Activated T-helper 1 cell treated with anti-CD3 and anti-CD28 coated beads, Interleukin-12 subunit alpha, Interleukin-12 subunit beta, Interleukin-2, Interleukin-4 antibody, amounts not matched to agents 30 ng/mL and 10 ng/mL and 1 ng/mL, durations not matched to agents 14 hours and 24 hours and 36 hours (primary cell): ENCODE measurements at regions of chr10 and their contacts with region 1.

Region 1: GRCh38 chr10:8130973-8131911 is 76.8 kb downstream of the GATA3 start:
- DNase-seq: peak; percentile 50
- H3K4me3 Mint-ChIP-seq: peak overlapping the region; percentile 61
- H3K27ac Mint-ChIP-seq: peak overlapping the region; percentile 90
- H3K4me1 Mint-ChIP-seq: peaks cover 62% of the 10 kb centered on the region
- H3K27me3 Mint-ChIP-seq: peaks cover 5% of the 10 kb centered on the region

Region 2: DNA sequence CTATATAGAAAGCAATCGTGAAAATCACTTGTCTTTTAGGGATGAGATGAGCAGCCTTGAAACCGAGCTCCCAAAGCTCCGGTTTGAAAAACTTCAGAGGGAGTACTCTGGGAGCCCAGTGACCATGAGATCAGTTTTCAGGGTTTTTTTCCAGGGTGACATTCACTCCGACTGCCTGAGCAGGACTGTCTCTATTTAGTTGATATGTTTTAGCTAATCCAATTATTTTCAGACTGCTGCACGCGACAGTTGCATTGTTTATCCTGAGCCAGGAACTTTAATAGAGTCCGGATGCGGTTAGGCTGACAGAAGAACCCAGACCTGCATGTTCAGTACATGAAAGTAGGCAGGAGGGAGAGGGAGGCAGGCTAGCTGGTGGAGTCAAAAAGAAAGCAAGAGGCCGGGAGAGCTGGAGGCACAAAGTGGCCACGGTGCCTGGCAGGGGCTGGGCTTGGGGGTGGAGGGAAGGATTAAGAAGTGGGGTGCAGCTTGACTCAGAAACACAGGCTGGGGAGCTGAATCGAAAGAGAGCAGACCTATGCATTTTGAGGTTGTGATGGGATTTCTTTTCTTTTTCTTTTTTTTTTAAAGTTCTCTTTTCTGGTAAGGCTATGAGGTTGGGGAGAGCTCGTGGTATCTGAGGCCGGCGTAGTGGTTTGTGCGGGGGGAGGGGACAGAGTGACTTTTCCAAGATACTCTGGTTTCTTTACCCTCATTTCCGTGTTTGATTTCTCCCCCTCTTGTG is 71.1 kb before region 1 on chr10:
- intact Hi-C with region 1: loop called (anchors 1 kb)
- DNase-seq: peak; percentile 73
- H3K4me3 Mint-ChIP-seq: peak overlapping the region; percentile 98
- H3K27ac Mint-ChIP-seq: peak overlapping the region; percentile 96
- H3K4me1 Mint-ChIP-seq: peaks cover 74% of the 10 kb centered on the region
- H3K27me3 Mint-ChIP-seq: peaks cover 1% of the 10 kb centered on the region

Region 3: DNA sequence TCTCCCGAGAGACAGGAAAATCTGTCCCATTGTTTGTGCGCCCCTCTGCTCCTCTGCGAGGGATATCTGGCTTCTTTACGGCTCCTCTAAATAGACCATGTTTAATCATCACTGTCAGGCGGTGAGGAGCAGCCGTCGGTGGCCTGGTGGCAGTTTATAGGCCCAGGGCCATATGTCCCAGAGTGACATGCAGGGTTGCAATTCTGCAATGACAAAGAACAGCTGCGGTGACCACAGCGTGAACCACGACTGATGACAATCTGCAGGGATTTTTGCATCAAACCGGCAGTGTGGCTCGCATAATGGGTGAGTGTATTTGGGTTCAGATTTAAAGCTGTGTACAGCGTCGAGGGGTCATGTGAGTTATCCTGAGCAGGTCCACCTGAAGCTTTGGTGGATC is 35.3 kb before region 1 on chr10:
- intact Hi-C with region 1: loop called (anchors 2 kb)
- DNase-seq: peak; percentile 20
- H3K4me3 Mint-ChIP-seq: no peak overlapping the region
- H3K27ac Mint-ChIP-seq: no peak overlapping the region
- H3K4me1 Mint-ChIP-seq: peaks cover 39% of the 10 kb centered on the region
- H3K27me3 Mint-ChIP-seq: peaks cover 5% of the 10 kb centered on the region

Region 4: GRCh38 chr10:8238986-8239385 is 107.7 kb after region 1 on chr10:
- intact Hi-C with region 1: loop called (anchors 1 kb)
- DNase-seq: peak; percentile 37
- H3K4me3 Mint-ChIP-seq: peak overlapping the region; percentile 41
- H3K27ac Mint-ChIP-seq: peak overlapping the region; percentile 75
- H3K4me1 Mint-ChIP-seq: peaks cover 66% of the 10 kb centered on the region
- H3K27me3 Mint-ChIP-seq: no peaks in the 10 kb centered on the region

Region 5: GRCh38 chr10:8331883-8332729 is 200.9 kb after region 1 on chr10:
- intact Hi-C with region 1: loop called (anchors 1 kb)
- DNase-seq: peak; percentile 78
- H3K4me3 Mint-ChIP-seq: peak overlapping the region; percentile 79
- H3K27ac Mint-ChIP-seq: peak overlapping the region; percentile 75
- H3K4me1 Mint-ChIP-seq: peaks cover 58% of the 10 kb centered on the region
- H3K27me3 Mint-ChIP-seq: peaks cover 6% of the 10 kb centered on the region

Region 6: DNA sequence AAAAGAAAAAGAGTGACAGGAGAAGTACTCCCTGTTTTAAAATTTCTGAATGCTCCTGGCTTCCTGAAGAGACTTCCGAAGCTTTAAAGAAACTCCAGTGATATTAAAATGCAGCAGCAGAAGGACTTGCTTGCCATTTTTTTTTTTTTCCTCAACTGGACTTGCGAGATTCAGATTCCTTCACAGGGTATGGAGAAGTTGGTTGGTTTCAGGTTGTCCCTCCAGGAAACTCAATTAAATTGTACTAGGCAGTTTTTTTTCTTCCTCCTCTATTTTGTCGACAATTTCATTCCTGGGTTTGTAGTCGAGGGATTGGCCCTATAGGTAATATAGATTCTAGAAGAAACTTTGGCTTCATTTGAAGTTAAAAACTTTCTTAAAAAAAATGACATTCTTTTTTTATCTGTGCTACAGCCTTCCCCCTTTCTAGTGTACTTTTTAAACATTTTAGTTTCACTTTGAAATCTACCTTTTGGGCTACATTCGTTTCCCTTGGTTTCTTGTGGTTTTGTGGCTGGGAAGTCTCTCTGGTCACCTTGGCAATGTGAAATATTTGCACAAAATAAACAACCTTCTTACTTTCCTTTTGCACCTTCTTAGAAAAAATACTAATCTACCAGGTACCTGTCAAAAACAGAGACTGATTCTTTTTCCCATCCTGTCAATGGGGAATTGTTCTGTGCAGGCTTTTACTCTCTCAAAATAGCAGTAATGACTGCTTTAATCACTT is 273.3 kb after region 1 on chr10:
- intact Hi-C with region 1: loop called (anchors 1 kb)
- DNase-seq: peak; percentile 68
- H3K4me3 Mint-ChIP-seq: peak overlapping the region; percentile 57
- H3K27ac Mint-ChIP-seq: peak overlapping the region; percentile 89
- H3K4me1 Mint-ChIP-seq: peaks cover 68% of the 10 kb centered on the region
- H3K27me3 Mint-ChIP-seq: peaks cover 10% of the 10 kb centered on the region